GM13977 (cell line): ENCODE measurements at regions of chr5 and their contacts with region 1.

Region 1: DNA sequence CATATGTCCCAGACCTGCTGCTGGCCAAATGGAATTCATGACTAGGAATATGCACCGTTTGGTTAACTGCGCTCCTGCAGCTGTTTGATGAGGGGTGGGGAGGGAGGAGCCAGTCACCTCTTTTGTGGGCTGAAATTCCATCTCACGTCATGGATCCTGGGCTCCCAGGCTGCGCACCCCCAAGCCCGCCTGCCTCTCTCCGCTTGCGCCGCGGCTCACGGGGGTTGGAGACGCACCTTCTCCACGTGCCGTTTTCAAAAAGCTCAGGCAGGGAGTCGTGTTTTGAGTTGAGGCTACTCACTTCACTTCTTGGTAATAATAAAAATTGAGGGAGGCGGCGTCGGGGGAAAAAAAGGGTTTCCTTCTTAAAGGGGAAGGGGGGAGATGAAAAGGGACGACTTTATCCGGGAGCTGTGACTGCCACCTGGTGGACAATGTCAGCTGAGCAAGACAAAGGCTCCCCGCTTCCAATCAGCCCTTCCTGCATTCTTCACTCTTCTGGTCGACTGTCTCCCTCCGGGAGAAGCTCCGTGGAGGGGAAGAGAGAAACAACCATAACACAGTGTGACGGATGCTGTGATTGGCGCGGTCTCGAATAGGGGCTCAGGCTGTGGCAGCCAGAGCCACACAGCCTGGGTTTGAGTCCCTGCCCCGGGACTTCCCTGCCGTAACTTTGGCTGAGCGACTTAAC is 15.9 kb upstream of the C5orf47 start:
- DNase-seq: peak; percentile 88
- CTCF ChIP-seq: peak; percentile 83

Region 2: GRCh38 chr5:173592050-173592669 is 380.9 kb before region 1 on chr5:
- in situ Hi-C with region 1: no loop called
- DNase-seq: no peak
- CTCF ChIP-seq: peak; percentile 45

Region 3: DNA sequence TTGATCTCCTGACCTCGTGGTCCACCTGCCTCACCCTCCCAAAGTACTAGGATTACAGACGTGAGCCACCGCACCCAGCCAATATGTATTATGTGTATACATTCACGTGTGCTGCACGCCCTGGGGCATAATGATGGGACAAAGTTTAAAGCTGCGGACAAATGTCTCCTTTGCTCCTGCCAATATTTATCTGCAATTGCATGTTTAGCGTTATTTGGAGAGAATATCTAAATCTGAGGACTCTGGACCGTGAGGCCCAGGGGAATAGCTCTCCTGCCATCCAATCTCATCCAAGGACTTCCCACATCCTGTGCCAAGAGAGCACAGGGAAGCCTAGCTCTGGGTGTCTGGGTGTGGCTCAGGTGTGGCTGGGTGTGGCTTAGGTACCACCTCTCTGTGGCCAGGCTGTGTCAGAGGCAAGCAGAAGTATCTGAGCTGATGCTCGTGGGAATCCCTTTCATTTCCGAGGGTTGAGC is 349.7 kb before region 1 on chr5:
- in situ Hi-C with region 1: loop called (anchors 5 kb)
- DNase-seq: no peak
- CTCF ChIP-seq: no peak